Psoas muscle (tissue), 8 donors: ENCODE measurements at regions of chr2 and their contacts with region 1.

Region 1: DNA sequence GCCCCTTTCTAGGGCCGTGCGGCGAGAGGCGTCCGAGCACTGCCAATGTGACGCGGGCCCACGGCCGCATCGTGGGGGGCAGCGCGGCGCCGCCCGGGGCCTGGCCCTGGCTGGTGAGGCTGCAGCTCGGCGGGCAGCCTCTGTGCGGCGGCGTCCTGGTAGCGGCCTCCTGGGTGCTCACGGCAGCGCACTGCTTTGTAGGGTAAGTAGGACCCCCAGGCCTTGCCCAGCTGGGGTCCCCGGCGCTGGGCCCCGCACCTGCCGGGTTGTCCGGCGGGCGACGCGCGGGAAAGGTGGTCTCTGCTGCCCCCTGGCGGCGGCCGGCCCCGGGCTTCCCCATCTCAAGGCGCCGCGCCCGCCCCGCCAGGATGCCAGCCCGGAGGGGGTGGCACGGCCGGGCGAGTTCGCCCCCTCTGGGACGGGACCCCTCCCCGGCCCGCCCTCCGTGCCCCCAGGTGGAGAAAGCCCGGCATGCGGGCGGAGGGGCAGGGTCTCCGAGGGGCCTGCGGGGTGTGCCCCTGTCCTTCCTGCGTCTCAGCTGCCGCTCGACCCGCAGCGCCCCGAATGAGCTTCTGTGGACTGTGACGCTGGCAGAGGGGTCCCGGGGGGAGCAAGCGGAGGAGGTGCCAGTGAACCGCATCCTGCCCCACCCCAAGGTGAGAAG is 1.9 kb downstream of the PRSS56 start:
- DNase-seq: peak; percentile 70 to 86
- ATAC-seq: peak; percentile 19 to 52 (median 32)
- H3K4me3 ChIP-seq: peak overlapping the region; percentile 81
- H3K27ac ChIP-seq: peak overlapping the region; percentile 41
- H3K4me1 ChIP-seq: peaks cover 33% of the 10 kb centered on the region
- H3K27me3 ChIP-seq: peaks cover 0 to 12% (median 0%) of the 10 kb centered on the region in 3 donors
- CTCF ChIP-seq: peak; percentile 95

Region 2: DNA sequence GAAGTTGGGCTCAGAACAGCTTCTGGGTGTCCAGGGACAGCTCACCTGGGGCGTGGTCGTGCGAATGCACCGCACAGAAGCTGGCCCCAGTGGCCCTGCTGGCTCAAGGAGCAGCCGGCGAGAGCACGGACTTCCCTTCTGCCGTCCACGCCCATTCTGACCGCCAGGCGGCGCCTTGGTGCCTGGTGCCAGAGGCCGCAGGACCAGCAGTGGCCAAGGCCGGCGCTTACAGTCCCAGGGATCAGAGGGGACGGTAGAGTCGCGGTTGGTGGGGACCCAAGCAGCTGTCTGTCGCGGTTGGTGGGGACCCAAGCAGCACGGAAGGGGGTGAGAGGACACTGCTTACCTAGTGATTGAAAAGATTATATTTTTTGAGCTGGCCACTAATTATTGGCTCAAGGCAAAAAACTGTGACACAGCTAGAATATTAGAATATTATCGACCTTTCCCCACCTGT is 621.6 kb before region 1 on chr2:
- intact Hi-C with region 1: loop called in 1 of 2 experiments (anchors 5 kb)
- DNase-seq: peak; percentile 77 to 81
- ATAC-seq: peak; percentile 74 to 88 (median 86)
- H3K4me3 ChIP-seq: no peak overlapping the region
- H3K27ac ChIP-seq: no peak overlapping the region
- H3K4me1 ChIP-seq: no peaks in the 10 kb centered on the region
- H3K27me3 ChIP-seq: peaks cover 0 to 3% (median 0%) of the 10 kb centered on the region in 3 donors
- CTCF ChIP-seq: peak; percentile 67

Region 3: DNA sequence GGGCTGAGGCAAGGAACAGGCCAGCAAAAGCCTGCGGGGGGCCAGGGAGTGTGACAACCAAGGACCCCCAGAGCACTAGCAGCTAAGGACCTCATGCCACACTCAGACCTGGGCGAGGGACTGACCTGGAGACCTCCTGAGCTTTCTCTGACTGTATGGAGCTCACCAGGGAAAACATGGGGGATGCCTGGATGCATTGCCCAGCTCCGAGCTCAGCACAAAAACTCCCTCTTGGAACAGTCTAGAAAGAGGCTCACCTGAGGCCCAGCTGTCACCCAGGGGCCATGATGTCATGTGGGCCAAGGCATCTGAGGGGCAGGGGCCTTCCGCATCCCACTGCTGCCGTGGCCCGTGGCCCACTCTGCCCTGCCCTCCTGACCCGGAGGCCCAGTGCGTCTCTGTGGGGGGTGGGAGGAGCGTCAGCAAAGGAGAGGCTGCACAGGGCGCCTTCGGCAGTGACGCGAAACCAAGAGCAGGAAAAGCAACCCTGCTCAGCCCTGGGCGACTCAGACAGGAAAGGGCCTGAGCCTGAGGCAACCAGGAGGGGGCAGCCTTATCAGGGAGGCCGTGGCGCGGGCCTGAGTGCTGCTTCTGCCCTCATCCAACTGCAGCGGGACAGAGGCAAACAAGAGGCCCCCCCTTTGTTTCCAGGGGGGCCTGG is 200.8 kb before region 1 on chr2:
- intact Hi-C with region 1: loop called in 1 of 2 experiments (anchors 5 kb)
- DNase-seq: peak in 1 of 2 donors; percentile 44
- ATAC-seq: no peak
- H3K4me3 ChIP-seq: no peak overlapping the region
- H3K27ac ChIP-seq: no peak overlapping the region
- H3K4me1 ChIP-seq: peaks cover 11% of the 10 kb centered on the region
- H3K27me3 ChIP-seq: no peaks in the 10 kb centered on the region
- CTCF ChIP-seq: no peak

Region 4: GRCh38 chr2:232455426-232456255 is 66.5 kb before region 1 on chr2 and contains the start of gene ALPI:
- intact Hi-C with region 1: loop called in 1 of 2 experiments (anchors 5 kb)
- DNase-seq: peak in 1 of 2 donors; percentile 36
- ATAC-seq: no peak
- H3K4me3 ChIP-seq: no peak within 1 kb of the TSS
- H3K27ac ChIP-seq: no peak within 1 kb of the TSS
- H3K4me1 ChIP-seq: no peaks in the 10 kb centered on the region
- H3K27me3 ChIP-seq: peaks cover 0 to 16% (median 0%) of the 10 kb centered on the region in 3 donors
- CTCF ChIP-seq: no peak
- total RNA-seq, gene ALPI: not detected

Region 5: GRCh38 chr2:232550354-232551249 is 28.5 kb after region 1 on chr2 and contains the starts of genes EIF4E2 and TIGD1:
- intact Hi-C with region 1: loop called in 1 of 2 experiments (anchors 2 kb)
- DNase-seq: peak; percentile 96 to 98
- ATAC-seq: peak; percentile 94 to 98 (median 96)
- H3K4me3 ChIP-seq: peak within 1 kb of the TSS; percentile 97
- H3K27ac ChIP-seq: peak within 1 kb of the TSS; percentile 99
- H3K4me1 ChIP-seq: peaks cover 38% of the 10 kb centered on the region
- H3K27me3 ChIP-seq: no peaks in the 10 kb centered on the region
- CTCF ChIP-seq: peak; percentile 28
- total RNA-seq, gene EIF4E2: 76.1 to 136 (median 88.4) TPM
- total RNA-seq, gene TIGD1: 2.3 to 4.9 (median 3.7) TPM

Region 6: GRCh38 chr2:232562515-232563151 is 40.5 kb after region 1 on chr2:
- intact Hi-C with region 1: no loop called
- DNase-seq: no peak
- ATAC-seq: no peak
- H3K4me3 ChIP-seq: no peak overlapping the region
- H3K27ac ChIP-seq: no peak overlapping the region
- H3K4me1 ChIP-seq: peaks cover 4% of the 10 kb centered on the region
- H3K27me3 ChIP-seq: no peaks in the 10 kb centered on the region
- CTCF ChIP-seq: no peak

Region 7: DNA sequence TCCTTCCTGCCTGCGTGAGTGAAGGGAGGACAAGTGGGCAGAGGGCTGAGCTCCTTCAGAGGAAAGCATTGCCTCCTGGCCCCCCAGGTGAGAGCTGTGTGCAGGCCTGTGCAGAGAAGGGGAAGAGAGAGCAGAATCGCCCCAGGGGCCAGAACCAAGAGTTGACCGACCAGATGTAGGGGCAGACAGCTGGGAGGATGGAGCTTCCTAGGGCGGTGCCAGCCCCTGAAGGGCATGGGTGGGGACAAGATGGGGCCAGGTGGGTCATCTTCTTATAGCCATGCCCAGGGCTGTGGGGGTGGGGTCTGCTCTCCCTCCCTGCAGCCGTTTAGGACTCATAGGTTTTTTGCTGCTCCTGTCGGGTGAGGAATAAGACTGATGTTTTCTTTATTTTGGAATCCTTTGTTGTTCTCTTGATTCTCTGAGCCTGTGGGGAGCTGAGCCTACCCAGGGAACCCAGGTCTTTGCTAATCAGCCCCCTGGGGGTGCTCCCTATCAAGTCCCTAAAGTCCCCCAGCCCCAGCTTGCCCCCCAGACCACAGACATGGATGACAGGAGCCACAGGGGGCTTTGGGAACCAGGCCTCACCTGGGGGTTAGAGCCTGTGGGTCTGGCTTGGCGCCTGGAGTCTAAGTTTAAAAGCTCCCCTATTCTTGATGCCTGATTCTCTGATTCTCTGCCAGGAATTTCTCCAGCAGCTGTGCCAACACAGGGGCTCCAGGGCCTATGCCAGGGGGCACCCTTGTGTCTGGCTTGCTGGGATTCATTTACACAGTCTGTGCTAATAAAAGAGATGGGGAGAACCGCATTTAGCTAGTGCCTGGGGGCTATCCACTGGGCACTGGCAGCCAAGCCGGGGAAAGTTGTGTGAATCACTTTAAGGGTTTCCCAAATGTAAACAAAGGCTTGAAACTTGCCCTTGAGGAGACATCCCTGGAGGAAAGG is 102.0 kb after region 1 on chr2:
- intact Hi-C with region 1: no loop called
- DNase-seq: no peak
- ATAC-seq: no peak
- H3K4me3 ChIP-seq: no peak overlapping the region
- H3K27ac ChIP-seq: no peak overlapping the region
- H3K4me1 ChIP-seq: no peaks in the 10 kb centered on the region
- H3K27me3 ChIP-seq: peaks cover 0 to 1% (median 0%) of the 10 kb centered on the region in 3 donors
- CTCF ChIP-seq: no peak